ENCODE measurements at regions of chr12 and their contacts with region 1.

Region 1: GRCh38 chr12:94649349-94650142 is 811 bp downstream of the TMCC3 start:
- DNase-seq: peak; percentile 40
- ATAC-seq: peak; percentile 53
- H3K4me3 ChIP-seq: peak overlapping the region; percentile 89
- H3K27ac ChIP-seq: peak overlapping the region; percentile 55
- H3K4me1 ChIP-seq: peaks cover 33% of the 10 kb centered on the region
- H3K27me3 ChIP-seq: no peaks in the 10 kb centered on the region
- CTCF ChIP-seq: peak; percentile 53

Region 2: GRCh38 chr12:94359761-94360160 is 289.8 kb before region 1 on chr12:
- CTCF ChIA-PET with region 1: no interaction called
- POLR2A ChIA-PET with region 1: no interaction called
- intact Hi-C with region 1: no loop called
- DNase-seq: no peak
- ATAC-seq: no peak
- H3K4me3 ChIP-seq: no peak overlapping the region
- H3K27ac ChIP-seq: no peak overlapping the region
- H3K4me1 ChIP-seq: no peaks in the 10 kb centered on the region
- H3K27me3 ChIP-seq: no peaks in the 10 kb centered on the region
- CTCF ChIP-seq: no peak

Region 3: GRCh38 chr12:94560431-94561221 is 88.9 kb before region 1 on chr12:
- CTCF ChIA-PET with region 1: no interaction called
- POLR2A ChIA-PET with region 1: no interaction called
- intact Hi-C with region 1: loop called (anchors 5 kb)
- DNase-seq: peak; percentile 97
- ATAC-seq: peak; percentile 96
- H3K4me3 ChIP-seq: peak overlapping the region; percentile 46; the same call in 1 of the 2 replicates
- H3K27ac ChIP-seq: peak overlapping the region; percentile 58
- H3K4me1 ChIP-seq: peaks cover 29% of the 10 kb centered on the region
- H3K27me3 ChIP-seq: no peaks in the 10 kb centered on the region
- CTCF ChIP-seq: no peak

Region 4: DNA sequence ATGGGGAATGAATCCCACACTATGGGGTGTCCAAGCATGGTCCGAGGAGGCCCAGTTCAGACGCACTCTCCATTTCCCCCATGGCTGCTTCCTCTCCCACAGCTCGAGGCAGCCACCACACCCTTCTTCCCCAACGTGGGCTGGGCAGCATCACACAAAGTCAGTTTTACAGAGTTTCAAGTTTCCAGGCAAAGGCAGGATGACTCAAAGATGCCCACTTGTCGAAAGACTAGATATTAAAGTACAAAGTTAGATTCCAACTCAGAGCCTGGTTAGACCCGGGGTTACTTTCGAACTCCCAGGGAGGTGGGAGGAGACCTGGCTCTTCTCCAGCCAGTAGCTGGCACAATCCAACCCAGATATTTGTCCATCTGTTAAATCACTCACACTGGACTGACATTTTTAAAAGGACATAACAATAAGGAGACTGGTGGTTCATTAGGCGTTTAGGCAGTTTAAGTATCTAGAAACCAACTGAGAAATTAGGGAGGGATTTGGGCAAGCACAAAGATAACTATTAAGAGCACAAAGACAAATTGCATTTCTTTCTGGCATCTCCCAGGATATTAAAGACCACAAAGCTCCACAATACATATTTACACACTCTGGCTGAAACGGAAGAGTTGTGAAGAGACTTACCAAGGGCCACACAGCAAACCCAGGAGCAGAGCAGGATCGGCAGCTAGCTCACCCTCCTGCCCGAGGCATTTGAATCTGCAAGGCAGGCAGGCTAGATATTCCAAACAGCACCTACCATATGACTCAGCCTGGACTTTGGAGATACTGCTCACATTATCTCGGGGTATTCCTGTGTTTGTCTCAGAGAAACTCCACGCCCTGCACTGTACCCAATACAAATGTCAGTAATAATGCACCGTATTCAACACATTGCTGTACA is 34.0 kb before region 1 on chr12:
- CTCF ChIA-PET with region 1: no interaction called
- POLR2A ChIA-PET with region 1: no interaction called
- intact Hi-C with region 1: loop called (anchors 2 kb)
- DNase-seq: peak; percentile 90
- ATAC-seq: peak; percentile 52
- H3K4me3 ChIP-seq: peak overlapping the region; percentile 62
- H3K27ac ChIP-seq: peak overlapping the region; percentile 99
- H3K4me1 ChIP-seq: peaks cover 60% of the 10 kb centered on the region
- H3K27me3 ChIP-seq: no peaks in the 10 kb centered on the region
- CTCF ChIP-seq: no peak

Region 5: GRCh38 chr12:94628819-94629472 is 20.6 kb before region 1 on chr12:
- CTCF ChIA-PET with region 1: no interaction called
- POLR2A ChIA-PET with region 1: no interaction called
- intact Hi-C with region 1: no loop called
- DNase-seq: no peak
- ATAC-seq: no peak
- H3K4me3 ChIP-seq: no peak overlapping the region
- H3K27ac ChIP-seq: no peak overlapping the region
- H3K4me1 ChIP-seq: no peaks in the 10 kb centered on the region
- H3K27me3 ChIP-seq: no peaks in the 10 kb centered on the region
- CTCF ChIP-seq: no peak

Region 6: GRCh38 chr12:94704452-94705306 is 55.1 kb after region 1 on chr12:
- CTCF ChIA-PET with region 1: no interaction called
- POLR2A ChIA-PET with region 1: no interaction called
- intact Hi-C with region 1: loop called (anchors 2 kb)
- DNase-seq: peak; percentile 96
- ATAC-seq: peak; percentile 96
- H3K4me3 ChIP-seq: 0 out of 2 replicates have a peak overlapping the region, but pooled peaks have one; percentile 26
- H3K27ac ChIP-seq: peak overlapping the region; percentile 32
- H3K4me1 ChIP-seq: peaks cover 23% of the 10 kb centered on the region
- H3K27me3 ChIP-seq: no peaks in the 10 kb centered on the region
- CTCF ChIP-seq: no peak

Measured in PC-3 (cell line).